ENCODE measurements at regions of chr4 and their contacts with region 1.

Region 1: GRCh38 chr4:111960241-111960667 is 185.0 kb upstream of the FAM241A start:
- DNase-seq: no peak
- H3K4me3 ChIP-seq: no peak overlapping the region
- CTCF ChIP-seq: no peak

Region 2: GRCh38 chr4:111997785-111998184 is 37.5 kb after region 1 on chr4:
- in situ Hi-C with region 1: loop called (anchors 5 kb)
- DNase-seq: no peak
- H3K4me3 ChIP-seq: no peak overlapping the region
- CTCF ChIP-seq: no peak

Measured in astrocyte of the cerebellum (primary cell).